CD14-positive monocyte (primary cell): ENCODE measurements at regions of chr10 and their contacts with region 1.

Region 1: DNA sequence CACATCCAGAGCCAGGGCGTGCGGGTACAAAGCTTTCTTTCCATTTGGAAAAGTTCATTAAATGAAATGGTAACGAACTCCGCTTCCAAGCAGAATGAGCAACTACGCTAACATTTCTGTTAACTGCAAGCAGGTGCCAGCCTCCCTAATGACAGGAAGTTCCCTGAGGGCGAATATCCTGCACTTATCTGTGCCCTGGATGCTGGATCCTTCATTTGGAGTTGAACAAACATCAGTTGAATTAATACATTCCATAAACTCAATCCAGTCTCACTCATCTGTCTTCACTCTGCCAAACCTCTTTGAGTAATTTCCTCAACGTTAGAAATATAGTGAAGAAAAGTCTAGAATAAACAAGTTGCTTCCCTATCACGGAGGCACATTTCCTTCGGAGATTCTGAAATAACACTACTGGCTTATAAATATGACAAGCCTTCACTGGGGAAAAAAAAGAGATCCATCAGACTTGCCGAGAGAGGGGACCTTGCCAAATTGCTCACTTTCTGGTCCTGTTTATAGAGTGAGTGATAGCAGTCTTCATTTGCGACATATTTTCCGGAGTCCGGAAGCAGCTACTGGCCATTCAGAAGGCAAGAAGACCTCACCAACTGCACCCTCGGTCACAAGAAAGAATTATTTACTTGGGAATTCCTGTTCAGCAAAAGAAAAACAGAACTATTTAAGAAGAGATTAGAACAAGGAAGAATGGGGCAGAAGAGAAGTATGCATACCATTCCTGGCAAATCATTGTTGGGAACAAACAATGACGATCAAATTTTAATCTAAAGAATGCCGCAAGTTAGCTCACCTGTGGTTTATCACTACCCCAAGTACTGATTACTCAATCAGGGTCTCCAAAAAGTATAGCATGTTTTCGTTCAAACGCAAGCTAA is 196.4 kb downstream of the FAM107B start:
- DNase-seq: peak in 2 of 3 donors; percentile 58 to 84
- H3K4me3 ChIP-seq: peak overlapping the region; percentile 10 to 63 (median 22)
- H3K4me3 Mint-ChIP-seq: peak overlapping the region; percentile 63 to 75
- H3K27ac ChIP-seq: peak overlapping the region; percentile 66 to 76
- H3K27ac Mint-ChIP-seq: peak overlapping the region; percentile 84 to 97 (median 96)
- H3K4me1 ChIP-seq: peaks cover 48 to 54% of the 10 kb centered on the region in 2 donors
- H3K4me1 Mint-ChIP-seq: peaks cover 75% of the 10 kb centered on the region
- H3K27me3 ChIP-seq: no peaks in the 10 kb centered on the region
- H3K27me3 Mint-ChIP-seq: peaks cover 0 to 1% (median 0%) of the 10 kb centered on the region in 3 donors
- CTCF ChIP-seq: no peak

Region 2: GRCh38 chr10:14536241-14537213 is 41.8 kb before region 1 on chr10:
- intact Hi-C with region 1: loop called in 1 of 2 experiments (anchors 5 kb)
- DNase-seq: peak; percentile 49 to 69 (median 66)
- H3K4me3 ChIP-seq: no peak overlapping the region
- H3K4me3 Mint-ChIP-seq: no peak overlapping the region
- H3K27ac ChIP-seq: peak overlapping the region in 1 of 2 donors; percentile 39
- H3K27ac Mint-ChIP-seq: peak overlapping the region in 6 of 7 donors; percentile 3 to 88 (median 42)
- H3K4me1 ChIP-seq: peaks cover 5 to 8% of the 10 kb centered on the region in 2 donors
- H3K4me1 Mint-ChIP-seq: peaks cover 22% of the 10 kb centered on the region
- H3K27me3 ChIP-seq: no peaks in the 10 kb centered on the region
- H3K27me3 Mint-ChIP-seq: no peaks in the 10 kb centered on the region
- CTCF ChIP-seq: peak; percentile 68